Aorta (tissue), 5 donors: ENCODE measurements at regions of chr12 and their contacts with region 1.

Region 1: DNA sequence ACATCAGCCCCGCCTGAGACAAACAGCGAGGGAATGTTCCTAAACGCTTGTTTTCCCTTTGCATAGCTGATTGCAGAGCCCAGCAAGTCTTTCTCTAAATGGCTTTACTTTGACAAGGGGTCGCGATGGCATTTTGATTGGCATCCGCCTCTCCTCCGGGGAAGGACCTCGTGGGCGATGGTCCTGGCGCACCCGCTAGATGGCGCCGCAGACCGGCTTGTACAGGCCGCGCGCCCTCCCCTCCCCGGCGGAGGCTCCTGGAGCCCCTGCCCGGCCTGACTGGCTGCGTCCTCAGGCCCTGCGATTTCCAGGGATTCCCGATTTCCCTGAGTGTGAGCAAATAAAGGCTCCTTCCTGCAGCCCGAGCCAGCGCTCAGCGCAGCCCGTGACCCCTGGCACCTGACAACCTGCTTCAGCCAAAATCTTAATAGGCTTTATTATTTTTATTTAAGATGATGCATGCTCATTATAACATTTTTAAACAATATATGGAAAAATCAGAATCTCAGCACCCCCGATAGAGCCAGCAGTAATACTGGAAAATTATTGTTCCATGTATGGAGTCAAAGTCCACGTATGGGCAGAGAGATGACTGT is 468.3 kb downstream of the AACS start:
- DNase-seq: no peak
- ATAC-seq: no peak
- H3K4me3 ChIP-seq: no peak overlapping the region
- H3K27ac ChIP-seq: no peak overlapping the region
- H3K4me1 ChIP-seq: no peaks in the 10 kb centered on the region
- H3K27me3 ChIP-seq: no peaks in the 10 kb centered on the region

Region 2: DNA sequence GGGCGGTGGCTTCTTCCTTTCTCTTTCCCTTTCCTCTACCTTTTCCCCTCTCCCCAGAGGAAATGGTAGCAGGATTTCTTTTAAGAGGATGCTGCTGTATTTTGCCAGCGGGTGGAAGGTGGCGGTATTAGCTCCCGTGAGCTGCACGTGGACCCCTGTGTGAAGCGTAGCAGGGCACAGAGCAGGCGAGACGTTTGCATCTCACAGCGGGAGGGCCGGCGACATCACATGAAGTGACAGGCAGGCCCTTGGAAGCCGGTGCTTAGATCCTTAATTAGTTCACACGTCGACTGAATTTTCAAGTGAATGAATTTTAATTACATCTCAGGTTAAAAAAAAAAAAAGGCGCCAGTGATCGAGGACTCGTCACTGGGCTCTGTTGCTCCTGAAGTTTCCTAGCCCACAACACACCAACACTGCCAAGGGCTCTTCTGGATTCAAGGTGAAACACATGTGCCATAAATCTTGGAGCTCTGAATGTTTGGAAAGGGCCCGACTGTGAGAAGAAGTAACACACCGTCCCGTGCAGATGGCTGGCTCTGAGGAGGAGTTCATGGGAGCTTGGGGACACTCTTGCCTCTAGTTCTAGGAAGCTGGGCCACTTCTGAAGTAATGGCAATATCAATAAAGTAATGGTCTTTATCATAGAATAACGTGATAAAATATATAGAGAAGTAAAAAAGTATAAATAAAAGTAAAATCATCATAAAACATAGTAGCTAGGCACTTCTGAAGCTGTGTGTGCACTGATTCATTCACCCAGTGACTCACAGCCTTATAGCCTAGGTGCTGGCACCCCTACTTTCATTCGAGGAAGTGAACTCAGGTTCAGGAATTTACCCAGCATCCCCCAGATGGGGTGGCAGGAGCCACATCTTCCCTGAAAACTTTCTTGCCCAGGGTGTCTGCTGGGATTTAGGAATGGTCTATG is 393.0 kb before region 1 on chr12:
- intact Hi-C with region 1: no loop called
- DNase-seq: no peak
- ATAC-seq: no peak
- H3K4me3 ChIP-seq: no peak overlapping the region
- H3K27ac ChIP-seq: no peak overlapping the region
- H3K4me1 ChIP-seq: no peaks in the 10 kb centered on the region
- H3K27me3 ChIP-seq: no peaks in the 10 kb centered on the region

Region 3: GRCh38 chr12:125773033-125773640 is 239.6 kb after region 1 on chr12:
- intact Hi-C with region 1: loop called in 1 of 2 experiments (anchors 5 kb)
- DNase-seq: no peak
- ATAC-seq: no peak
- H3K4me3 ChIP-seq: no peak overlapping the region
- H3K27ac ChIP-seq: no peak overlapping the region
- H3K4me1 ChIP-seq: no peaks in the 10 kb centered on the region
- H3K27me3 ChIP-seq: no peaks in the 10 kb centered on the region

Region 4: GRCh38 chr12:126747530-126748149 is 1214.1 kb after region 1 on chr12:
- intact Hi-C with region 1: loop called in 1 of 2 experiments (anchors 10 kb)
- DNase-seq: peak in 1 of 2 donors; percentile 49
- ATAC-seq: no peak
- H3K4me3 ChIP-seq: no peak overlapping the region
- H3K27ac ChIP-seq: no peak overlapping the region
- H3K4me1 ChIP-seq: no peaks in the 10 kb centered on the region
- H3K27me3 ChIP-seq: no peaks in the 10 kb centered on the region

Region 5: GRCh38 chr12:126874427-126875026 is 1341.0 kb after region 1 on chr12:
- intact Hi-C with region 1: loop called in 1 of 2 experiments (anchors 5 kb)
- DNase-seq: peak; percentile 58 to 82
- ATAC-seq: peak; percentile 58
- H3K4me3 ChIP-seq: no peak overlapping the region
- H3K27ac ChIP-seq: no peak overlapping the region
- H3K4me1 ChIP-seq: no peaks in the 10 kb centered on the region
- H3K27me3 ChIP-seq: no peaks in the 10 kb centered on the region